ENCODE measurements at regions of chr17 and their contacts with region 1.

Region 1: GRCh38 chr17:67759355-67760171 is 41.8 kb downstream of the NOL11 start:
- DNase-seq: peak; percentile 42 to 46
- ATAC-seq: peak; percentile 78 to 96 (median 92)
- H3K4me3 ChIP-seq: peak overlapping the region in 1 of 10 donors; percentile 5
- H3K27ac ChIP-seq: peak overlapping the region in 7 of 10 donors; percentile 29 to 78 (median 58)
- H3K4me1 ChIP-seq: peaks cover 0 to 14% (median 0%) of the 10 kb centered on the region in 9 donors
- H3K27me3 ChIP-seq: no peaks in the 10 kb centered on the region
- CTCF ChIP-seq: no peak

Region 2: DNA sequence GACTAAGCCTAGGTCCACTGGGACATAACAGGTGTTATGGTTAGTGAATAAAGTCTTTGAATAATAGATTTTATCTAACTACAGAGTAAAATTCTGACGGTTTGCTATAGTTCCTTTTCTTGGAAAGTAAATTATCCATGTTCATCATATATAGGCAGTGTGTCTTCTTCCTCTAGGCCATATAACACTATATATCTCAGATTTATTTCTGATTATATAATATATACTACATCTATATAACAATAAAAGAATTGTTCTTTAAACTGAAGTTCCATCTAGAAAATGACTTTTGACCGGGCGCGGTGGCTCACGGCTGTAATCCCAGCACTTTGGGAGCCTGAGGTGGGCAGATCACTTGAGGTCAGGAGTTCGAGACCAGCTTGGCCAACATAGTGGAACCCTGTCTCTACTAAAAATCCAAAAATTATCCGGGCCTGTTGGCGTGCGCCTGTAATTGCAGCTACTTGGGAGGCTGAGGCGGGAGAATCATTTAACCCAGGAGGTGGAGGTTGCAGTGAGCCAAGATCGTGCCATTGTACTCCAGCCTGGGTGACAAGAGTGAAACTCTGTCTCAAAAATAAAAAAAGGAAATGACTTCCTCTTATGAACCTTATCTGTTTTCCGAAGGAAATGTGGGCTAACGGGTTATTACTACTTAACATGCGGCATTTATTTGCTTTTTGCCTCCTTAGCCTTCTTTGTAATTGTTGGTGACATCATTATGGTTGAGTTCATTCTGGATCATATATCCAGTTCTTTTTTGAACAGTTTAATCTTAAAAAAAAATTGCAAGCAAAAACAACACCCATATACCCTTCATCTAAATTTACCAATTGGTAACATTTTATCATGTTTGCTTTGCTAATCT is 12.6 kb before region 1 on chr17:
- intact Hi-C with region 1: loop called in 1 of 10 experiments (anchors 1 kb)
- DNase-seq: no peak
- ATAC-seq: no peak
- H3K4me3 ChIP-seq: no peak overlapping the region
- H3K27ac ChIP-seq: no peak overlapping the region
- H3K4me1 ChIP-seq: no peaks in the 10 kb centered on the region
- H3K27me3 ChIP-seq: no peaks in the 10 kb centered on the region
- CTCF ChIP-seq: no peak

Region 3: DNA sequence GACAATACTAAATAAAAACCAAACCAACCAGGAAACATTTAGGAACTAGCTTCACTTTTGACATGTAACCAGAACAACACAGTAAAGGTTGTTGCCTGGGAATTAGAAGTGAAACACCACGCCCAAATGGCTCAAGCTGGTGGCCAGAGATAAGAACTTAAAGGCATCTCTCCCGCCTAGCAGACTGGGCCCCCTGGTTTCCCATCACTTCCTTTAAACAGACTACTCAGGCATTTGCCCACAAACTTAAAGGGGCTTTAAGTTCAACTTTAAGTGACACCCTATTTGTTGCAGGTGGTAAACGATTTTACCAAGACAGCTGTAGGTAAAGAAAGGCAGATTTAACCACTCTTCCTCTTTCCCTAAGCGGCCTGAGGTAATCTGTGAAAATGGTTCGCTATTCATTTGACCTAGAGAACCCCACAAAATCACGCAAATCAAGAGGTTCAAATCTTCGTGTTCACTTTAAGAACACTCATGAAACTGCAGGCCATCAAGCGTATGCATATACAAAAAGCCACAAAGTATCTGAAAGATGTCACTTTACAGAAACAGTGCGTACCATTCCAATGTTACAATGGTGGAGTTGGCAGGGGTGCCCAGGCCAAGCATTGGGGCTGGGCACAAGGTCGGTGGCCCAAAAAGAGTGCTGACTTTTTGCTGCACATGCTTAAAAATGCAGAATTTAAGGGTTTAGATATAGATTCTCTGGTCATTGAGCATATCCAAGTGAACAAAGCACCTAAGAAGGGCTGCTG is 25.0 kb after region 1 on chr17:
- intact Hi-C with region 1: no loop called
- DNase-seq: peak in 1 of 2 donors; percentile 8
- ATAC-seq: peak in 2 of 8 donors; percentile 27 to 39
- H3K4me3 ChIP-seq: no peak overlapping the region
- H3K27ac ChIP-seq: no peak overlapping the region
- H3K4me1 ChIP-seq: peaks cover 0 to 5% (median 0%) of the 10 kb centered on the region in 9 donors
- H3K27me3 ChIP-seq: no peaks in the 10 kb centered on the region
- CTCF ChIP-seq: no peak

Region 4: GRCh38 chr17:67824735-67825626 is 65.4 kb after region 1 on chr17 and contains the start of gene BPTF:
- intact Hi-C with region 1: no loop called
- DNase-seq: peak; percentile 92 to 93
- ATAC-seq: peak; percentile 96 to 98 (median 98)
- H3K4me3 ChIP-seq: peak within 1 kb of the TSS; percentile 55 to 92 (median 80)
- H3K27ac ChIP-seq: peak within 1 kb of the TSS; percentile 89 to 98 (median 96)
- H3K4me1 ChIP-seq: peaks cover 0 to 39% (median 39%) of the 10 kb centered on the region in 9 donors
- H3K27me3 ChIP-seq: no peaks in the 10 kb centered on the region
- CTCF ChIP-seq: peak; percentile 86 to 99 (median 96)
- total RNA-seq, gene BPTF: 56.7 to 102 (median 86.6) TPM